Transverse colon (tissue), 4 donors: ENCODE measurements at regions of chr19 and their contacts with region 1.

Region 1: DNA sequence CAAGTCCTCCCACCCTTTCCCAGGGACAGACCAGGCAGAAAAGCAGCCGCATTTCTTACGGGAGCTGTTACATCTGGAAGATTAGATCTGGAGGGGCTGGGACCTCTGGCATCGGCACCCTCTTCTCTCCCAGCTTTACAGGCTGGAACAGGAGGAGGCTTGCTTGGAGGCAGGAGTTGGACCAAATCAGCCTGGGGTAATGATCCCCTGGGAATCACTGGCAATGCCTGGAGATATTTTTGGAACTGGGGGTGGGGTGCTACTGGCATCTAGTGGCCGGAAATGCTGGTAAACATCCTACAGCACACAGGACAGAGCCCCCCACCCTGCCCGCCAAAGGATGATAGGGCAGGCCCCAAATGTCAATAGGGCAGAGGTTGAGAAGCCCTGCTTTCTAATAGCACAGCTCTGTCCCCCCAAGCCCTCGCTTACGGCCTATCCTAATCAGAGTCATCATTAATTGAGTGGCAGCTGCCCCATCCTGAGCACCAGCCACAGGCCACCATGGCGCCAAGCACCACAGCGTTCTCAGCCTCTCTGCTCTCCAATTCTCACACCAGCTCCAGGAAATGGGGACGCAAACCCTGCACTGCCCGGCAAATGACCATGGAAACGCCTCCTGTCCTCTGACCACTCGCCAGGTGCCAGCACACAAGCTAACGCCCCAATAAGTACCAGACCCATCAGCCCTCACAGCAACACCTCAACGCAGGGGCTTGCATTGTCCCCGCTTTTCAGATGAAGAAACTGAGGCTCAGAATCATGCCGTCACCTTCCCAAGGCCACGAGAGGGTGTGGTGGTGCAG is 20.6 kb downstream of the LRRC4B start:
- DNase-seq: no peak
- H3K4me3 ChIP-seq: no peak overlapping the region
- H3K27ac ChIP-seq: no peak overlapping the region
- H3K4me1 ChIP-seq: peaks cover 0 to 4% (median 0%) of the 10 kb centered on the region in 4 donors
- H3K27me3 ChIP-seq: peaks cover 33% of the 10 kb centered on the region
- CTCF ChIP-seq: no peak
- EP300 ChIP-seq: no peak
- POLR2A ChIP-seq: no peak

Region 2: DNA sequence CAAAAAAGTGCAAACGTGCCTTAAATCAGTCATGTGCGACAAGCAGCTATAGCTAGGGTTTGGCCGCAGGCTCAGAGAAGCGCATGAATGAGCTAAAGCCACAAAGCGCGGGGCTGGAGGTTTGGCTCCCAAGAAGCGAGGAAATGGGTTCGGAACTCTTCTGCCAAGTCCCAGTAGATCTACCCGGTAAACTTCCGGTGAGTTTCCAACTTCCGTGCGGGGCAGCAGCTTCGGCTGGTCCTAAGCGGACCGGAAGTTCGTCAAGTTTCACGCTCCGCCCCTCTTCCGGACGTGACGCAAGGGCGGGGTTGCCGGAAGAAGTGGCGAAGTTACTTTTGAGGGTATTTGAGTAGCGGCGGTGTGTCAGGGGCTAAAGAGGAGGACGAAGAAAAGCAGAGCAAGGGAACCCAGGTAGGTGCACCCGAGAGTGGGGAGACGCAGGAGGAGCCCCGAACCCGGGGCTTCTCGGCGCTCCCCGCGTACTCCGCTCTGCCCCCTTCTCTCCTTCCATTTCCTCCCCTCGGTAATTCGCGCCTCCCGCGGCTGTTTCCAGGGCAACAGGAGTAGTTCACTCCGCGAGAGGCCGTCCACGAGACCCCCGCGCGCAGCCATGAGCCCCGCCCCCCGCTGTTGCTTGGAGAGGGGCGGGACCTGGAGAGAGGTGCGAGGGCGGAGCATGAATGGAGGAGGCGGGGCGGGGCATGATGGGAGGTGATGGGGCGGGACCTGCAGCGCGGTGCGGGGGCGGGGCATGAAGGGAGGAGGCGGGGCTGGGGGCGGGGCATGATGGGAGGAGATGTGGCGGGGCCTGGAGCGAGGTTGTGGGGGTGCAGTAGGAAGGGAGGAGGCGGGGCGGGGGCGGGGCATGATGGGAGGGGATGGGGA is 171.2 kb before region 1 on chr19 and contains the start of gene NR1H2:
- in situ Hi-C with region 1: no loop called
- intact Hi-C with region 1: no loop called
- DNase-seq: peak; percentile 97
- H3K4me3 ChIP-seq: peak within 1 kb of the TSS; percentile 79 to 97 (median 94)
- H3K27ac ChIP-seq: peak within 1 kb of the TSS; percentile 97 to 99 (median 99)
- H3K4me1 ChIP-seq: peaks cover 3 to 12% (median 7%) of the 10 kb centered on the region in 4 donors
- H3K27me3 ChIP-seq: no peaks in the 10 kb centered on the region
- CTCF ChIP-seq: no peak
- EP300 ChIP-seq: no peak
- POLR2A ChIP-seq: peak; percentile 88
- total RNA-seq, gene NR1H2: 80.8 to 192 (median 102) TPM

Region 3: DNA sequence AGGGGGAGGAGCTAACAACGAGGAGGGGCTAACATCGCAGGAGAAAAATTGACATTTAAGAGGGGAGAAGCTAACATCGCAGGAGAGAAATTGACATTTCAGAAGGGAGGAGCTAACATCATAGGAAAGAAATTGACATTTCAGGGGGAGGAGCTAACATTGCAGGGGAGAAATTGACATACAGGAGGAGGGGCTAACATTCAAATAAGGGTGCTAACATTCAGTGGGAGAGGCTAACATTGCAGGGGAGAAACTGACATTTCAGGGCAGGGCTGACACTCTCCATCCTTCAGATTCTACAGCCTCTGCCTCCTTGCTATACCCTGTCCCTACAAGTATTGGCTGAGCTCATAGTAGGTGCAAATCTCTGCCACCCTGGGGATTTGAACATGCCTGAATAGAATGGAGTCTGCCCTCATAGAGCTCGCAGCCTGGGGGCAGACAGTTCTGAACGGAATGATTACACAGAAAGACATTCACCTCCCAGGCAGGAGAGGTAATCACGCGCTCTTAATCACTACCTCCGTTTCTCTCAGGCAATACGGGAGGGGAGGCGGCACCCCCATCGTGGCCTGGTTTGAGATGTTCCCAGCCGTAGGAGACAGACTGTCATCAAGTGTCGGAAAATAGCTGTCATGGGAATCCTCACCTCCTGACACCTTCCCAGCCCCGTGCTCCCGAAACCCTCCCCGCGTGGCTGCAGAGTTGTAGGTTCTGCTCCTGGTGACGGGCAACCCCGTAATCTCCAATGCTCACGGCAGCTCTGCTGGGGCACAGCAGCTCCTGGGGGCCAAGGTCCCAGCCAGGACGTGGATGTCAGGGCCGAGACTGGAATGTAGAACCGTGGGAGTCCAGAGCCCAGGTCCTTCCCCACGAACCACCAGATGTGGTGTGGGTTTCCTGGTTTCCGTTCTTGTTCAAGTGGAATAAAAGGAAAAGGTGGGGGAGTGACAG is 232.2 kb after region 1 on chr19:
- in situ Hi-C with region 1: loop called in 3 of 4 experiments (anchors 10 to 25 kb)
- intact Hi-C with region 1: no loop called
- DNase-seq: no peak
- H3K4me3 ChIP-seq: no peak overlapping the region
- H3K27ac ChIP-seq: no peak overlapping the region
- H3K4me1 ChIP-seq: peaks cover 0 to 6% (median 2%) of the 10 kb centered on the region in 4 donors
- H3K27me3 ChIP-seq: peaks cover 85% of the 10 kb centered on the region
- CTCF ChIP-seq: no peak
- EP300 ChIP-seq: no peak
- POLR2A ChIP-seq: no peak